ENCODE measurements at regions of chr18 and their contacts with region 1.

Region 1: GRCh38 chr18:23380001-23380550 is 73.0 kb upstream of the RIOK3 start:
- DNase-seq: peak; percentile 96
- H3K4me3 ChIP-seq: no peak overlapping the region
- H3K27ac ChIP-seq: peak overlapping the region; percentile 80 to 93 (median 90)
- H3K4me1 ChIP-seq: peaks cover 26 to 41% of the 10 kb centered on the region in 2 donors
- H3K27me3 ChIP-seq: no peaks in the 10 kb centered on the region
- CTCF ChIP-seq: peak in 2 of 6 experiments; percentile 16 to 22
- POLR2A ChIP-seq: no peak

Region 2: GRCh38 chr18:23126376-23127056 is 253.6 kb before region 1 on chr18:
- intact Hi-C with region 1: loop called (anchors 10 kb)
- DNase-seq: no peak
- H3K4me3 ChIP-seq: no peak overlapping the region
- H3K27ac ChIP-seq: no peak overlapping the region
- H3K4me1 ChIP-seq: peaks cover 0 to 2% of the 10 kb centered on the region in 2 donors
- H3K27me3 ChIP-seq: no peaks in the 10 kb centered on the region
- CTCF ChIP-seq: no peak
- POLR2A ChIP-seq: no peak

Measured in thyroid gland (tissue), 4 donors.